GM10248 (cell line): ENCODE measurements at regions of chr1 and their contacts with region 1.

Region 1: GRCh38 chr1:21368515-21369289 is 71.2 kb upstream of the NBPF3 start:
- DNase-seq: peak; percentile 64
- CTCF ChIP-seq: peak; percentile 97

Region 2: DNA sequence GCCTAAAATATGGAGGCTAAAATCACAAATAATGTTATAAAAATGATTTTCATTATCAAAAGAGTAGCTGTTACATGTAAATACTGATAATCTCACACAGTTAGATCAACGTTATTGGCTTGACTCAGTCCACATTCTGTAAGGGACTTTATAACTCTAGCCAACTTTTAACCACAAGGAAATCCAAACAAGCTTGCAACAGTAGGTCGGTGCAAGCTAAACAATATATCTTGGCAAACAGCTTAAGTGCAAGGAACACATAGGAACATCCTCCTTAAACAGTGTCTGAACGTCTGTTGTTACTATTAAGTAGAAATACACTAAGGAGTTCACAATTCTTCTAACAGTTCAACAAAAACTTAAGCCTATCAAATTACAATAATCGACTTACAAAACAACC is 318.7 kb before region 1 on chr1:
- CTCF ChIA-PET with region 1: no interaction called
- POLR2A ChIA-PET with region 1: no interaction called
- DNase-seq: no peak
- CTCF ChIP-seq: no peak

Region 3: GRCh38 chr1:21238141-21238800 is 130.4 kb before region 1 on chr1:
- CTCF ChIA-PET with region 1: interaction called, 170 read pairs
- POLR2A ChIA-PET with region 1: no interaction called
- DNase-seq: no peak
- CTCF ChIP-seq: no peak

Region 4: DNA sequence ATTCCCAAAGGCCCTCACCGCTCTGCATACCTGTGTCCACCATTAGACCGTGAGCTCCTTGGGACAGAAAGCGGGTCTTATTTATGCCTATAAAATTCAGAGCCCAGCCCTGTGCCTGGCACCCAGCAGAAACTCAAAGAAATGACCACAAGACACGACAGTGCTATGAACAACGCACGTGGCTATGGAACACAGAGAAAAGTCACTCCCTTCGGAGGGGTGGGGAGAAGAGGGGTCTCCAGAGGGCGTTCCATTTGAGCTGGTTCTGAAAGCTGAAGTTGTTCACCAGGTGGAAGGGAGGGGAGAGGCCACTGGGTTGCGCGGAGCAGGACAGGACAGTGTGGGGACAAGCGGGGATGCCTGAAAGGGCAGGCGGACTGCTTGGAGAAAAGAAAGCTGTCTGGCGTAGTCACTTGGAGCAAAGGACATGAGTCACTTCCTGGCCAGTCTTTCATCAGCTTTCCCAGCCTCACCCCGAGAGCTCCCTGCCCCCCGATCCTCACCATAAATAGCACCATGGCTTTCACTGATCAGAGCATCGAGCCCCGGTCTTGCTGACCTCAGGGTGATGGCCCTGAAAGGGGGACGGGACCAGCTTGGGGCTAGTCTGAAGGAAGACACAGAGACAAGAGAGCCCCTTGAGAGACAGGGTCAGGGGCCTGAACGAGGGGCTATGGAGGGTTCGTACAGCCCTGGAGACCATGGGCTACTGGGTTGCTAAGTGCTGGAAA is 107.0 kb before region 1 on chr1:
- CTCF ChIA-PET with region 1: interaction called, 313 read pairs
- POLR2A ChIA-PET with region 1: no interaction called
- DNase-seq: no peak
- CTCF ChIP-seq: no peak

Region 5: DNA sequence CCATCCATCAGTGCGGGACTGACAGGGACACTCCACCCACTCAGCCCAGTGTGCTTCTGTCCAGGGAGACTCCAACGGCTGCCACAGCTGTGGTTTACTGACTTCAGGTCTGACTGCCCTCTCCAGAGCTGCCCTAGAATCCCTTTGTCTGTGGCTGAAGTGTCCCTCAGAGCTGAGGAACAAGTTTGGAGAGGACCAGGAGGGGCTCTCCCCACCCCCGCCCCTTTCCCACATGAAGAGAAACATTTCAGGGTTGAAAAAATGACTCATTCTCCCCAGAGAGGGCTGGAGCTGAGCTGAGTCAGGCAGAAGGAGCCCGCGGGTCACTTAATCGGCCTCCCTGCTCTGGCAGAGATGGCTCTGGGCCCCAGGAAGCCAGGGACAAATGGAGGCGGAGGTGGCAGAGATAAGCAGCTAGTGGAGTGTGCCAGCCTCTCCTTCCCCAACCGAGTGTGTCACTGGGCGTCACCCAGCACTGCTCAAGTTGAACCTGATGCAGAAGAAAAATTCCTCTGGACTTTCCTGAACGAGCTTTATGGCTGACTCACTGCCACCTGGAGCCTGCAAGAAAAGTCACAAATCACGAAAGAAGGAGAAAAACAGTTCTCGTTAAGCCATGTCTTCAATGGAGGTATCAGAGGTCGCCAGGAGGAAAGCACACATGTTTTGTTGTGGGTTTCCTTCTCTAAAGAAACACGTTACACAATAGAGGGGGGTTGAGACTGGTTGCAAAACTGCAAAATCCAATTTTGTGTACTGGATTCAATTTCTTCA is 44.1 kb before region 1 on chr1:
- CTCF ChIA-PET with region 1: interaction called, 16 read pairs
- POLR2A ChIA-PET with region 1: no interaction called
- DNase-seq: peak; percentile 76
- CTCF ChIP-seq: no peak

Region 6: GRCh38 chr1:21355956-21356355 is 12.7 kb before region 1 on chr1:
- CTCF ChIA-PET with region 1: interaction called, 13 read pairs
- POLR2A ChIA-PET with region 1: interaction called, 3 read pairs
- DNase-seq: no peak
- CTCF ChIP-seq: no peak

Region 7: DNA sequence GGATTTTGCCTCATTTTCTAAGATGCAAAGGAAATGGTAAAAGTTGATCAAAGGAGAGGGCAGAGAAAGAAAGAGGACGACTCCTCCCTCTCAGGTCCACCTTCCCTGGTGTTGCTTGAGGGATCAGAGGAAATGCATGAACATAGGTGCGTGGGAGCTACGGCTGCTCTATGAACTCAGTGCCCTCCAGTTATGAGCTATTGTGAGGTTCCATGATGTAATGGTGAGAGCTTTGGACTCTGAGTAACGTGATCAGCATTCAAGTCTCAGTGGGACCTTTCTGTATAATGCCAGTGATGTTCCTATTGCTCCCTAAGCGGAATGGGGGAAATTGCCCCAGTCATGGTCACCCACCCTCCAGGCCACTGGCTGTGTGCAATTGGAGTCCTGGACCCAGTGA is 45.3 kb after region 1 on chr1:
- CTCF ChIA-PET with region 1: no interaction called
- POLR2A ChIA-PET with region 1: no interaction called
- DNase-seq: no peak
- CTCF ChIP-seq: no peak

Region 8: GRCh38 chr1:21534674-21535378 is 166.1 kb after region 1 on chr1:
- CTCF ChIA-PET with region 1: interaction called, 23 read pairs
- POLR2A ChIA-PET with region 1: no interaction called
- DNase-seq: peak; percentile 72
- CTCF ChIP-seq: peak; percentile 63